AG04449 (cell line): ENCODE measurements at regions of chr12 and their contacts with region 1.

Region 1: GRCh38 chr12:5745265-5745888 is 199.7 kb downstream of the ANO2 start:
- DNase-seq: no peak
- H3K4me3 ChIP-seq: no peak overlapping the region
- CTCF ChIP-seq: peak; percentile 88

Region 2: DNA sequence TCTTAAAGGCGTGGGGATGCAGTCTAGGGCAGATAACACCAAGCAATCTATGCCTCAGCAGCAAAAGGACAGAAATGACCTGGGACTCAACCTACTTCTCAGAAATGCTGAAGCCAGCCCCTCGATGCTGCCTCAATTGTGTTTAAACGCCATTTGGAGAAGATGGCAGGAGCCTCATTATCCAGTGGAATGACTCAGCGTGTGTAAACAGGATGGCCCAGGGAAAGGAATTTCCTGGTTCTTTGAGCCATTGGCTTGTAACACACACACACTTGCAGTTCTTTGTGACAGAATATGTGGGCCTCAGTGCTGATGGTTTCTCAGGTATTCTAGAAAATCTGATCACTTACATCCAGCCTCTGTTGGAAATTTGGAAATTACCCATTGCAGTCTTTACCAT is 159.2 kb before region 1 on chr12:
- CTCF ChIA-PET with region 1: no interaction called
- POLR2A ChIA-PET with region 1: no interaction called
- DNase-seq: peak; percentile 17
- H3K4me3 ChIP-seq: no peak overlapping the region
- CTCF ChIP-seq: no peak

Region 3: DNA sequence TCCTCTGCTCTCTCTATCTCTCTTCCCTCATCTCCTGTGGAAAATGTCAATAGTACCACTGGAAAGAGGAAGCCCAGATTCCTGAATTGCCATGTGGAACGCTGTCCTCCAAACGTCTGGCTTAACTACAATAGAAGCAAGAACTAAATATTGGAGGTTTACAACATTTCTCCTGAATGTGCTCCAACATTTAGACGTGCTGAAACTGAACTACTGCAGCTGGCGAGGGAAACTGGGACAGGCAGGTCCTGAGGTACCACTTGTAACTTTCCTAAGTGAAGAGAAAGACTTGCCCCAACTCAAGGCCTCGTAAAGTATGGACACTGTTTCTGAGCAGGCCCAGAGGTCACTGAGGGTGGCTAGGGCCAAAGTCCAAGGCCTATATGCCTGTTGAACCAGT is 125.7 kb before region 1 on chr12:
- CTCF ChIA-PET with region 1: no interaction called
- POLR2A ChIA-PET with region 1: no interaction called
- DNase-seq: no peak
- H3K4me3 ChIP-seq: no peak overlapping the region
- CTCF ChIP-seq: no peak

Region 4: DNA sequence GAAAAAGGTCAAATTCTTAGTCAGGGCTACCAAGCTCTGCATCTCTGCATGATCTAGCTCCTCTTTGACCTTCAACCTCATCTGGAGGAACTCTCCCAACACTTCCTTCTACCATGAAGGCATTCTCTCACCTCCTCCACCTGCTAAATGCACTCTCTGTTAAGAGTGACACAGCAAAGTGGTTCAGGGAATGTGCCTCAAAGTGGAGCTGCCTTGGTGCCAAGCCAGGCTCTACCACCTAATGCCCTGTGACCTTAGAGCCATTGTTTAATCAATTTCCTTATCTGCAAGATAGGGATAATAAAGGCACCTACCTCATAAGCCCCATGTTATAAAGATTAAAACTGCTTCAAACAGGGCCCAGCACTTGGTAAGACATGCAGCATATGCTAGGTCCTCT is 37.0 kb before region 1 on chr12:
- CTCF ChIA-PET with region 1: interaction called, 10 read pairs
- POLR2A ChIA-PET with region 1: no interaction called
- DNase-seq: no peak
- H3K4me3 ChIP-seq: no peak overlapping the region
- CTCF ChIP-seq: no peak

Region 5: DNA sequence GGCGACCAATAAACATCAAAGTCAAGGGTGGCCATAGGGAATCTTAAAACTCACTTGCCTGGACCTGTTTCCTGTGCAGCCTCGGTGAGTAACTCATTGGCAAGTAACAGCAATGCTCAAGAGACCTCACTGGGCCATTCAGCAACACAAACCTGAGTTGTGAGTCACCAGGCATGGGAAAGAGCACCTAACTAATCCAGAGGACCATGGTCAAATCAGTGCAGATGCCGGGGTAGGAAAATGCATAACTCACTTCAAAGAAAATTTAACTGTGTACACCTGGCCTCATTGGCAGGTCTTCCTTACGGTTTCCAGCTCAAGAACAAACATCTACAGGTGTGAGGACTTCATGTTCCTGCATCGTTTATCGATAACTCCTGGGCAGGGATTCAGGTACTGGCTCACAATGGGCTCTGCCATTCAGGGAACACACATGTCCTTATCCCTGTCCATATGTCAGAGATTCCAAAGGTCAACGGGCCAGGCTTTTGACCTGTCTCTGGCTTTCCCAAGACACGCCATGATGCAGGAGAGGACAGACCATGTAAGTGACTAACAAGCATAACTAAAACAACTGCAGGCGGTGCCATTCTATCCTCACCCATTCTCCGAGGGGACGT is 12.1 kb before region 1 on chr12:
- CTCF ChIA-PET with region 1: interaction called, 52 read pairs
- POLR2A ChIA-PET with region 1: no interaction called
- DNase-seq: no peak
- H3K4me3 ChIP-seq: no peak overlapping the region
- CTCF ChIP-seq: no peak

Region 6: DNA sequence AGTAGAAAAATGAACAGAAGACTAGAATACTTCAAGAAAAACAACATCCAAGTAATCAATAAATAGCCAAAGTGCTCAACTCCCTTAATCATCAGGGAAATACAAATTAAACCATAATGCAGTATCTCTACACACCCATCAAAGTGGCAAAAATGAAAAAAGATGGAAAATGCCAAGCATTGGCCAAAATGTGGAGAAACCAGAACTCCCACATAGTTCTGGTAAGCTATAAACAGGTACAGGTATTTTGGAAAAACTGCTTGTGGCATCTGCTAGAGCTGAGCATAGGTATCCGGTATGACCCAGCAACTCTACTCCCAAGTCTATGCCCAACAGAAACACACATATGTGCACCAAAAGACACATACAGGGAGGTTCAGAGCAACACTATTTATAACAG is 20.5 kb after region 1 on chr12:
- CTCF ChIA-PET with region 1: interaction called, 18 read pairs
- POLR2A ChIA-PET with region 1: no interaction called
- DNase-seq: no peak
- H3K4me3 ChIP-seq: no peak overlapping the region
- CTCF ChIP-seq: no peak

Region 7: GRCh38 chr12:5808981-5809380 is 63.6 kb after region 1 on chr12:
- CTCF ChIA-PET with region 1: interaction called, 12 read pairs
- POLR2A ChIA-PET with region 1: no interaction called
- DNase-seq: peak; percentile 85
- H3K4me3 ChIP-seq: no peak overlapping the region
- CTCF ChIP-seq: no peak